Esophagus muscularis mucosa (tissue), 4 donors: ENCODE measurements at regions of chr18 and their contacts with region 1.

Region 1: GRCh38 chr18:24014062-24014985 is at the start of gene TTC39C:
- DNase-seq: peak; percentile 93
- H3K4me3 ChIP-seq: peak within 1 kb of the TSS; percentile 71 to 96 (median 82)
- H3K27ac ChIP-seq: peak within 1 kb of the TSS; percentile 81 to 91 (median 86)
- H3K4me1 ChIP-seq: peaks cover 10 to 31% (median 24%) of the 10 kb centered on the region in 4 donors
- H3K27me3 ChIP-seq: no peaks in the 10 kb centered on the region
- CTCF ChIP-seq: no peak
- EP300 ChIP-seq: no peak
- POLR2A ChIP-seq: no peak
- total RNA-seq, gene TTC39C: 32.3 to 45.4 (median 34.8) TPM

Region 2: DNA sequence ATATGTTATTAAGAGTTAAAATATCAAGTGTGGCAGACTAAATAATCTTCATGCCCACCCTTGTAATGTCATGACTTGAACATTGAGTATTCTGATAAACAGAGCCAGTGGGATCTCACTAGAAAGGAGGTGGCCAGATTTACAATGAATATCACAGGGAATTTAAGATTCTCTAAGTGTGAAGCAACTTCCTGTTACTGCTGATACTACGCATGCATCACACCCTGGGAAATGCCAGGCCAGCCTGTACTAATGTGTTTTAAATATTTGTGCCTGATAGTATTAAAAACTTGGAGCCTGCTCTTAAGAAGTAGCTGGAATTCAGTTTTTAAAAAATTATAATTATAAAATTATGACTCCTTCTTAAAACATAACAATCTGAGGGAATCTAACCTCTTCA is 176.7 kb before region 1 on chr18:
- intact Hi-C with region 1: loop called (anchors 10 kb)
- DNase-seq: peak; percentile 34
- H3K4me3 ChIP-seq: no peak overlapping the region
- H3K27ac ChIP-seq: no peak overlapping the region
- H3K4me1 ChIP-seq: peaks cover 0 to 9% (median 4%) of the 10 kb centered on the region in 4 donors
- H3K27me3 ChIP-seq: no peaks in the 10 kb centered on the region
- CTCF ChIP-seq: no peak
- EP300 ChIP-seq: no peak
- POLR2A ChIP-seq: no peak

Region 3: DNA sequence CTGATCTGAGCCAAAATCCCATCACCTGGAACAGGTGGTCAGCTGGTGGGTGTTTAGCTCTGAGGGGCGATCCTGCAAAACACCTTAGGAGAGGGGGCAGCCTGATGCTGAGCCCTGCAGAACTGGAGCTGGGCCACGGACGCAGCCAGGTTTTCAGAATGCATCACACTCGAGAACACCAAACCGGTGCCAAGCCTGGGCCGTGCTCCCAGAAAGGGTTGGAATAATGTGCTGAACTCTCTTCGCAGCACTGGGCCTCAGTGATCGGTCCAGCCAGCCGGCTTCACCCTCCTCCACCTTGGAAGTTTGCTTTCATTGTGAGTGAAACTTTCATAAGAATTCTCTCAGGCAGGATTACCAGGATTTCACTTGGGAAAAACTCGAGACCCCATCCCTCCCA is 56.3 kb before region 1 on chr18:
- intact Hi-C with region 1: loop called (anchors 10 kb)
- DNase-seq: no peak
- H3K4me3 ChIP-seq: no peak overlapping the region
- H3K27ac ChIP-seq: peak overlapping the region; percentile 67 to 81 (median 76)
- H3K4me1 ChIP-seq: peaks cover 9 to 34% (median 29%) of the 10 kb centered on the region in 4 donors
- H3K27me3 ChIP-seq: no peaks in the 10 kb centered on the region
- CTCF ChIP-seq: no peak
- EP300 ChIP-seq: no peak
- POLR2A ChIP-seq: no peak

Region 4: DNA sequence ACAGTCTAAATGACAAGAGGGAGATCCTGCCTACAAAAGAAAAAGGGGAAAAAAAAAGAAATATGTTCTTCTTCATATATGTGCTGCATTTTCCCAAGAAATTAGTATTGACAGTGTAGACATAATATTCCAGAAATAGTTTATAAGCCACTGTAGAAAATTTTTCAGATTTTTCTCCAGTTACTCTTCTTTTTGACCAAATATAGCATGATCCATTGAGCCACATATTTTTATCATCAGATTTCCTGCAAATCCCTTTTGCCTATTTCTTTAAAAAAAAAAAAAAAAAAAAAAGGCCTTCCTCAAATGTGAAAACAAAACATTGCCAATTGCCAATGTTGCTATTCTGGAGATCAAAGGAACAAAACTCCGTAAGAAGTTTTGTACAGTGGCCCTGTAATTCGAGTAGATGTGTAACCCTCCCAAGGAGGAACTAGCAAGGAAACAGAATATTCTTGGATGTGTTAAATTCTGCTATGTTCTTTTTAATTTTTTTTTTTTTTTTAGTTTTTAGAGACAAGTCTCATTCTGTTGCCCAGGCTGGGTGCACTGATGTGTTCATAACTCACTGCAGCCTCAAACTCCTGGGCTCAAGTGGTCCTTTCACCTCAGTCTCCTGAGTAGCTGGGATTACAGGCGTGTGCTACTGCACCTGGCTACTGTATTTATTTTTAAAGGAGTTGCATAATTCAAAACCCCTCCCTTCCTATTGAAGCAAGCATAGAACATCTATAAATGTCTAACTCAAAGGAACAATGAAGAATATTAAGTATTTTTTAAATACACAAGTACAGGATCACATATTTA is 112.0 kb after region 1 on chr18:
- intact Hi-C with region 1: no loop called
- DNase-seq: peak; percentile 60
- H3K4me3 ChIP-seq: no peak overlapping the region
- H3K27ac ChIP-seq: no peak overlapping the region
- H3K4me1 ChIP-seq: no peaks in the 10 kb centered on the region
- H3K27me3 ChIP-seq: no peaks in the 10 kb centered on the region
- CTCF ChIP-seq: no peak
- EP300 ChIP-seq: no peak
- POLR2A ChIP-seq: no peak